ENCODE measurements at regions of chr3 and their contacts with region 1.

Region 1: DNA sequence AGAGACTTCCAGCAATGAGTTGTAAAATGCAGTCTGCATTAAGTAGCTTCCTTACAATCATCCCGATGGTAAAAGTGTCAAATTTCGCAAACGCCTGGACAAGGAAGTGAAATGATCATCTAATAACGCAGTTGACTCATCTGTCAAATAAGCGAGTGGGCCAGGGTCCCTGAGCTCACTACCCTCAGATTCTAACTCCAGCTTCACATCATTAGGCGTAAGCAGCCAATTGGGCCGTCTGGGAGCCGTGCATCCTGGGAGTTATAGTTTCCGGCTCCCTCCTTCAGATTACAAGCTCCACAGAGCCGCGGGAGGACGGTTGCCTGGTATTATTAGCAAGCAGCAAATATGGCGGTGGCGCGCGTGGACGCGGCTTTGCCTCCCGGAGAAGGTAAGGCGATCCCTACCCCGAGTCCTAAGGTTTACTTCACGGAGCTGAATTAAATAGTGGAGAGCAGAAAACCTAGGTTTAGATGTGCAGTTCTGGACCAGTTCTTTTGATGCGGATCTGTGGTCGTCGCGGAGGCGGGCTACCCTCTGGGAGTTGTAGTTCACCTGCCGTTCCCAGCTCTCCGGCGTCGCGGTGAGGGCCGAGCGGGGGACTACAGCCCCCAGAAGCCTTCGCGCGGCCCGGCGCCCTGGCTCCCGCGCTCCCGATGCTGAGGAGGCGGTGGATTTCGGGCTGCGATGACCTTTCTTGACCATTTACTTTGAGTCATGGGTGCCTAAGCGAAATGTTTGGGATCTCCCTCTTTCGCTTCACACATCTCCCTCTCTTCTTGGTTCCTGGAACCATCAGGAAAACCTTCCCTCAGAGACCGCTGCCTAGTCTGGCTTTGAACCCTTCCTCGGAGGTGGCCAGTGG is at the start of gene CEP97:
- DNase-seq: peak; percentile 96
- total RNA-seq, gene CEP97: 7.9 TPM

Region 2: GRCh38 chr3:101685870-101686412 is 38.6 kb before region 1 on chr3:
- intact Hi-C with region 1: loop called (anchors 2 kb)
- DNase-seq: no peak

Region 3: GRCh38 chr3:101779047-101779821 is 54.7 kb after region 1 on chr3 and contains the start of gene NXPE3:
- intact Hi-C with region 1: loop called (anchors 2 kb)
- DNase-seq: peak; percentile 98
- total RNA-seq, gene NXPE3: 26.9 TPM

Region 4: GRCh38 chr3:101876142-101876541 is 151.6 kb after region 1 on chr3:
- intact Hi-C with region 1: no loop called
- DNase-seq: no peak

Region 5: GRCh38 chr3:102006812-102007485 is 282.4 kb after region 1 on chr3:
- intact Hi-C with region 1: no loop called
- DNase-seq: no peak

Region 6: DNA sequence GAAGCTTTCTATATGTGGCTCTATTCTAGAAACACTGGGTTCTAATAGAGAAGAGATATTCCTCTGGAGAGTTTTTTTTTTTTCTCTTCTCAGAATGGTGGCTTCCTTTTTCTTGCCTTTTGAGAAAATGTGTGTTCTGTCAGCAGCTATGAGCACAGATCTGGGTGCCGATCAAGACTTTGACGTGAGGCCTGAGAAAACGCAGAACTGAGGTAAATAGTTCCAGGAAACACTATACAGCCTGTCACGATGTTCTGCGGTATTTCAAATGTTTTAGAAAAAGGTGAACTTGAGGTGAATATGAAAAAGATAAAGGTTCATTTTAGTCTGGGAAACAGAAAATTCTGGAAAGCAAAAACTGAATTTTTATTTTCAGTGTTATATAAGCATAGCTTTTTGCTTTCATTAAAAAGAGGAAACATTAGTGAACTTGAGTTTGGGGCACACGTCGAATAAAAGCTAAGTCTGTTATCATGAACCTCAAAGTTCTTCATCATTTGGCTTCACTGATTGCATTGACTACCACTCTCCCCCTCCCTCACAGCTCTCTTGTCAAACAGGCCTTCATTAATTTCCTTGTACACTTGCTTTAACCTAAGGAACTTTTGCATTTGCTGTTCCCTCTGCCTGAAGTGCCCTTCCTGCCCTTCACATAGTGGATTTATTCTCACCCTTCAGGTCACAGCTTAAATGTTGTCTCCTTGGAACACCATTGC is 389.9 kb after region 1 on chr3:
- intact Hi-C with region 1: no loop called
- DNase-seq: no peak